Right lobe of liver (tissue), 6 donors: ENCODE measurements at regions of chr2 and their contacts with region 1.

Region 1: DNA sequence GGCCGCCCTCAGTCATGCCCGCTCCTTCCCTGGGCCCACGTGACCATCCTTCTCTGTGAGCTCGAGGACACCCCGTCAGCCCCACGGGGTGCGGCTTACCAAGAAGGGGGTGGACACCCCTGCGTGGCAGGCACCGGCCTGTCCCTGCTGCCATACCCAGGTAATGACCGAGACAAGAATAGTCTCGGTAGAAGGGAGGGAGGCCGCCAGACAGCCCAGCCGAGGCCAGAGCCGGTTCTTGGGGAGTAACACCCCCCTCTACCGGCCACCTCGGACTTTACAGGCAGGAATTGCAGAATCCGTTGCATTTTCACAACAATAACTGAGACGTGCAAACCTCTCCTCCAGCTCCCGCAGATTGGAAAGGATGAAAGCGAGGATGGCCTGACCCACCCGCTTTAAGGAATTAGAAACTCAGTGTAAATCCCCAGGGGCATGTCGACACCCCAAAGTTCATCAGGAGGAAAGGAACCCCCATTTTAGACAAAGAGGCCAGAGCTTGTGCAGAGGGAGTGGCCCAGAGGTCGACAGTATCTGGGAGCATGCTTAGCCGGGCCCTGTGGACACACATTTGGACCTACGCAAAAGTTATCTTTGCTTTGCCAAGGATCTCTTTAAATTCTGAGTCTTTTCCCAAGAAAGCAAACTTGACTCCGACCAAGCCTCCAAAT is 60.1 kb upstream of the GLI2 start:
- DNase-seq: peak; percentile 68 to 77 (median 77)
- ATAC-seq: peak; percentile 85 to 88 (median 86)
- H3K4me3 ChIP-seq: no peak overlapping the region
- H3K27ac ChIP-seq: no peak overlapping the region
- H3K4me1 ChIP-seq: no peaks in the 10 kb centered on the region
- H3K27me3 ChIP-seq: no peaks in the 10 kb centered on the region
- CTCF ChIP-seq: peak; percentile 81 to 92 (median 84)
- POLR2A ChIP-seq: no peak

Region 2: GRCh38 chr2:120312861-120313694 is 362.5 kb before region 1 on chr2:
- intact Hi-C with region 1: loop called in 1 of 2 experiments (anchors 10 kb)
- DNase-seq: peak; percentile 83 to 84 (median 84)
- ATAC-seq: peak; percentile 92 to 96 (median 94)
- H3K4me3 ChIP-seq: peak overlapping the region; percentile 37 to 48 (median 47)
- H3K27ac ChIP-seq: peak overlapping the region in 1 of 3 donors; percentile 56
- H3K4me1 ChIP-seq: peaks cover 0 to 10% (median 0%) of the 10 kb centered on the region in 4 donors
- H3K27me3 ChIP-seq: no peaks in the 10 kb centered on the region
- CTCF ChIP-seq: peak; percentile 87 to 92 (median 90)
- POLR2A ChIP-seq: no peak

Region 3: DNA sequence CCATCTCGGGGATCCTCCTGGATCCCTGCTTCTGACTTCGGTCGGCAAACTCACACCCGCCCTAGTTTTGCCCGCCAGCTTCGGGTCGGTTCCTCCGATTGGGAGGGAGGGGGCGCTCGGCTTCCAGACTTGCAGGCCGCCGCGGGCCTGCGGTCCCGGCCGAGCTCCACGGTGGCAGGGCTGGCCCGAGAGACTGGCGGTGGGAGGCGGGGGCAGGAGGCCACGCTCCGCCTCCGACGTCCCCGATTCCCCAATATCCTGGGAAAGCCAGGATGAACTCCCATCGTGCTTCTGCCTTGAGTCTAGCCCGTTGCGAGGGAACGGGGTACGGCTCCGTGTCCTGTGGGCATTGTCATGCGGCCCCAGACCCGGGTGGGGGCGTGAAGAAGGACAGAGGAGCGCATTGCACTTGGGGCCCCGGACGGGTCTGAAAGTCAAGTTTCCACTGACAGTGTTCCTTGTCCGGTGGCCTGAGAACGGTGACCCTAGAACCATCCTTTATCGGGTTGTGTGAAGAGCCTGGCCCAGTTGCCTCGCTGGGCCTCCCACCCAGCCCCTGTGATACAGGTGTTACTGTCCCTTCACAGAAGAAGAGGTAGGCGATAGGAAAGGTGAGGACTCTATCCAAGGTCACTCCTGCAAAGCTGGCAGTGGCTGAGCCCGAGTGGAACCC is 332.0 kb before region 1 on chr2:
- intact Hi-C with region 1: loop called (anchors 5 kb)
- DNase-seq: peak; percentile 85 to 92 (median 91)
- ATAC-seq: peak; percentile 81 to 85 (median 84)
- H3K4me3 ChIP-seq: peak overlapping the region; percentile 13 to 58 (median 56)
- H3K27ac ChIP-seq: peak overlapping the region in 1 of 3 donors; percentile 88
- H3K4me1 ChIP-seq: peaks cover 0 to 45% (median 8%) of the 10 kb centered on the region in 4 donors
- H3K27me3 ChIP-seq: no peaks in the 10 kb centered on the region
- CTCF ChIP-seq: peak; percentile 82 to 90 (median 90)
- POLR2A ChIP-seq: peak; percentile 48

Region 4: DNA sequence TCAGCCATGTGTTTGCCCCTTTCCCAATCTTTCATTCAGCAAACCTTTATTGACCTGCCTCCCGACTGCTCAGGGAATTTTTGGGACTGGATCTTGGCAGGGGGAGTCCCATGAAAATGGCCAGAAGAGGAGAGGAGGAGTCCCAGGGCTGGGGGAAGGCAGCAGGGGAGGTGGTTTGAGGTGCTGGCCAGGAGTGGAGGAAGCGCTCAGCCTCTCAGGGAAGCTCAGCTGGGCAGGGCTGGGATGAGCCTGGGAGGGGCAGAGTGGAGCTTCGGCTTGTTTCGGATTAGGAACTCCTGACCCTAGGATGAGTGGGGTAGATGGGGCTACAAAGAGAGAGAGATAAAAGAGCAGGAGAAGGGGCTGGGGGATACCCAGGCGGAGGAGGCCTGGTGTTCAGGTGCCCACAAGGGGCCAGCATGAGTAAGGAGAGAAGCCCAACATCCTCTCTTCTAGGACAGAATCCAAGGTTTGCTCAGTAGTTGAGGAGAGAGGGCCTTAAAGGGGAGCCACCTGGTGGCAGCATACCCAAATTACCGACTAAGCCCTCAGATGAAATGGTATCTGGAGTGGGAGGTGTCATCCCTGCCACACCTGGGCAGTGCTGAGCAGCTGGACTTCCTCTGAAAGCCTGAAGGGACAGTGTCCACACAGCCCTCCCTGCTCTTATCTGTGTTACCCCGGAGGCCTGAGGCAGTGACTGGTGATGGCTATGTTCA is 238.6 kb before region 1 on chr2:
- intact Hi-C with region 1: loop called in 1 of 2 experiments (anchors 10 kb)
- DNase-seq: peak in 1 of 3 donors; percentile 29
- ATAC-seq: peak; percentile 73 to 86 (median 83)
- H3K4me3 ChIP-seq: no peak overlapping the region
- H3K27ac ChIP-seq: no peak overlapping the region
- H3K4me1 ChIP-seq: peaks cover 0 to 4% (median under 1%) of the 10 kb centered on the region in 4 donors
- H3K27me3 ChIP-seq: no peaks in the 10 kb centered on the region
- CTCF ChIP-seq: peak; percentile 49 to 67 (median 61)
- POLR2A ChIP-seq: no peak

Region 5: GRCh38 chr2:120566331-120567035 is 109.1 kb before region 1 on chr2:
- intact Hi-C with region 1: loop called in 1 of 2 experiments (anchors 10 kb)
- DNase-seq: peak in 2 of 3 donors; percentile 13 to 25
- ATAC-seq: peak in 1 of 4 donors; percentile 8
- H3K4me3 ChIP-seq: no peak overlapping the region
- H3K27ac ChIP-seq: no peak overlapping the region
- H3K4me1 ChIP-seq: peaks cover 0 to 9% (median 4%) of the 10 kb centered on the region in 4 donors
- H3K27me3 ChIP-seq: no peaks in the 10 kb centered on the region
- CTCF ChIP-seq: no peak
- POLR2A ChIP-seq: no peak